Left ventricle myocardium inferior (tissue), 1 donor: ENCODE measurements at regions of chr1 and their contacts with region 1.

Region 1: GRCh38 chr1:92858564-92859399 is 26.9 kb downstream of the RPL5 start:
- DNase-seq: no peak
- H3K4me3 ChIP-seq: peak overlapping the region; percentile 55
- H3K27ac ChIP-seq: no peak overlapping the region
- H3K4me1 ChIP-seq: peaks cover 10% of the 10 kb centered on the region
- H3K27me3 ChIP-seq: no peaks in the 10 kb centered on the region
- CTCF ChIP-seq: peak; percentile 97

Region 2: DNA sequence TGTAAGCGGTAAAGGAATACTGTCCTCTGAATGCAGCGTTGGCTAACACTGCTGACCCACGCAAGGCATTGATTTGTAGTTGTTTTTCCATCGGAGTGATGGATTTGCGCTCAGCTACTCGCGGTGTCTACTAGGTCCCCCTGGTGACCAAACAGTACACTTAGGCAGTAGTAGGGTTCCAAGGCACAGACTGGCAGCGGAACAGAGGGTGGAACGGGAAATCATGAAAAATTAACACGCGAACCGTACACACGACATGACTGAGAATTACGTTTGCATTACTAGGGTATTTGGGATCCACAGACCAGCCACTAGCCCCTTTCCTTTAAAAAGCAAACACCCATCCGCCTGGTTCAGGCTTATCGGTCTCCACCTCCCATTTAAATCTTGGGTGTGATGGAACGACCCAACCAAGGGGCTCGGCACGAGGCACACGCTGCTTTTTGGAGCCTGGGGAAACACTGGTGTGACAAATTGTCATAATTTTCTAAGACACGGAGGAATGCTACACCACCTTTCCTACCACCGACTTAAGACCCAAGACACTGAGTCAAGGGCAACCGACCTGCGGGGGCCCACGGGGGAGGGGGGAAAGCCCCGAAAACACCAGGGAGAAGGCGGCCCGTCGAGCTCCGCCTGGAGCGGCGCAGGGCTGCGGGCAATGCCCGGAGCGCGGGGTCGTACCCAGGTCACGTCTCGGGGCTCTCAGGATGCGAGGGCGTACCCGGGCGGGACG is 101.8 kb after region 1 on chr1:
- intact Hi-C with region 1: no loop called
- DNase-seq: peak; percentile 33
- H3K4me3 ChIP-seq: peak overlapping the region; percentile 97
- H3K27ac ChIP-seq: peak overlapping the region; percentile 98
- H3K4me1 ChIP-seq: peaks cover 49% of the 10 kb centered on the region
- H3K27me3 ChIP-seq: no peaks in the 10 kb centered on the region
- CTCF ChIP-seq: peak; percentile 72

Region 3: GRCh38 chr1:92994105-92994712 is 135.4 kb after region 1 on chr1:
- intact Hi-C with region 1: loop called (anchors 2 kb)
- DNase-seq: no peak
- H3K4me3 ChIP-seq: no peak overlapping the region
- H3K27ac ChIP-seq: no peak overlapping the region
- H3K4me1 ChIP-seq: no peaks in the 10 kb centered on the region
- H3K27me3 ChIP-seq: no peaks in the 10 kb centered on the region
- CTCF ChIP-seq: peak; percentile 89

Region 4: DNA sequence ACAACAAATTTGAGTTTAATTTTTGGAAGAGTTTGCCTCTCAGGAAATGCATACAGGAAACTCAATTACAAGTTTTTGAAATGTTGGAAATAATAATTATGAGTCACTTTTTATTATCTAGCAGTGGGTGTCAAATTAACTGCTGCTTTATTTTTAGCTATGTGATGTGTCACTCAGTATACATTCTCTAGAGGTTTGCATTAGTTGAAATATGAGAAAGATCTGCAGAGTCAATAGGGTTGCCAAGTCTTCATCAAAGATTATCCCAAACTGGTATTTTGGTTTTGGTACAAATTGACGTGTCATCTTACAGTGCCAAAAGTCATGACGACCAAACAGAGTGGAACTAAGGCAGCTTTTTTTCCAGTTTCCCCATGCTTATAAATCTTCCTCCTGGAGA is 156.8 kb after region 1 on chr1:
- intact Hi-C with region 1: no loop called
- DNase-seq: no peak
- H3K4me3 ChIP-seq: no peak overlapping the region
- H3K27ac ChIP-seq: no peak overlapping the region
- H3K4me1 ChIP-seq: peaks cover 6% of the 10 kb centered on the region
- H3K27me3 ChIP-seq: peaks cover 25% of the 10 kb centered on the region
- CTCF ChIP-seq: no peak